Activated CD8-positive, alpha-beta T cell treated with anti-CD3 and anti-CD28 coated beads, Interleukin-2, amount 10 ng/mL, durations not matched to agents 7 days and 5 days (primary cell): ENCODE measurements at regions of chr16 and their contacts with region 1.

Region 1: DNA sequence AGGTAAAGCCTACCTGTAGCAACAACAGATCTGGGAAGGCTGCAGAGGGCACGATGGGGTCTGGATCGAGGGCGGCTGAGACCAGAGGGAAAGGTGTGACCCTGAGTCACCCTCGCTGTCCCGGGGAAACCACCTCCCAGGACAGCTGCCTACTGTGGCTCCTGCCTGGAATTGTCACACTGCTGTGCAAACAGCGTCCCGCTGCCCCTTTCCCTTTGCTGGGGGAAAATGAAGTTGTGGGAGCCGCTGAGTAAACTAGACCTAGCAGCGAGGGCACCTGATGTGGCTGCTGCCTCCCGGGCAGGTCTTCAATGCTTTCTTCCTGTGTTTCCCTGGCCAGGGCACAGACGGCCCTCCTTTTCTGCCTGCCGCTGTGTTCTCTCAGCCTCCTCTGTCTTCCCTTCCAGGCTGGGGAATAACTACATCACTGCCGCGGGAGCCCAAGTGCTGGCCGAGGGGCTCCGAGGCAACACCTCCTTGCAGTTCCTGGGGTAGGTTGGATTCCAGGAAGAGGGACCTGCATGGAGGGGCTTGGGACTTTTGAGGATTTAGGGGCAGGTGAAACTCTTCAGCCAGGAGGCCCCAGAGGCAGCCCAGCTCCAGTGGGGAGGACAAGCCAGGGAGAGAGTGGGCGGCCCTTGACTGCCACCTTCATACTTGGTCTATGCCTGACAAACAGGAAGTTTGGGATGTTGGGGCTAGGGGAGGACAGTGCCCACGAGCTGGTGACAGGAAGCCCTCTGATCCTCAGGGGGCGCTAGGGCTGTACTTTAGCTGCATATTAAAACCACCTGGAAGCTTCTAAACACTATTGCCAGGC is 22.2 kb upstream of the CYLD start:
- DNase-seq: peak; percentile 38
- ATAC-seq: peak; percentile 73
- H3K4me3 Mint-ChIP-seq: no peak overlapping the region
- H3K27ac Mint-ChIP-seq: peak overlapping the region; percentile 75
- H3K4me1 Mint-ChIP-seq: peaks cover 45% of the 10 kb centered on the region
- H3K27me3 Mint-ChIP-seq: no peaks in the 10 kb centered on the region

Region 2: DNA sequence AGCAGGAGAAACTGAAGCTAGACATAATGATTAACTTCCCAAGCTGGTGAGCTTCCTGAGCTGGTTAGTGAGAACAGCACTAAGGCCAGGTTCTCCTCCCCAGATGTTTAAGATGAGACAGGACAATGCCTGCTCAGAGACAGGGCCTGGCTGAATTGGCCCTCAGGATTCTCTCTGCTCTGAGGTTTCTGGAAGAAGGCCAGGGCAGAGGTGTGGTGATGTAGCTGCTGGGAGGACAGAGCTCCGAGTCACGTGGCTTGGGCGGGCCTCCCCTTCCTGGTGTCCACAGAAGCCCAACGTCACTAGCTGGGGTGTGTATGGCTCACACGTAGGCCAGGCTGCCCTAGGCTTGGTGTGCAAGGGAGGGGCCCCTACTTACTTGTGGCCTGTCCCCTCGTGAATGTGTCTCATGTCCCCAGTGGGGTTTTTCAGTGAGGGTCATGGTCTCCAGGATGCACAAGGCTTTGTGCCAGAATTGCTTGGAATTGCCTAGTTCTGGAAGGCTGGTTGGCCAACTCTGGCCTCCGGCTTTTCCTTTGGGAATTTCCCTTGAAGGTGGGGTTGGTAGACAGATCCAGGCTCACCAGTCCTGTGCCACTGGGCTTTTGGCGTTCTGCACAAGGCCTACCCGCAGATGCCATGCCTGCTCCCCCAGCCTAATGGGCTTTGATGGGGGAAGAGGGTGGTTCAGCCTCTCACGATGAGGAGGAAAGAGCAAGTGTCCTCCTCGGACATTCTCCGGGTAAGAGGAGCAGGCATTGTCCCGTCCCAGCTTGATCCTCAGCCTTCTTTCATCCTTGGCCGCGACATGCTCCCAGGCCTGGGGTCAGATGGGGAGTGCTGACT is 22.9 kb before region 1 on chr16:
- CTCF ChIA-PET with region 1: interaction called, 14 read pairs
- POLR2A ChIA-PET with region 1: no interaction called
- DNase-seq: no peak
- ATAC-seq: no peak
- H3K4me3 Mint-ChIP-seq: no peak overlapping the region
- H3K27ac Mint-ChIP-seq: peak overlapping the region; percentile 81
- H3K4me1 Mint-ChIP-seq: peaks cover 58% of the 10 kb centered on the region
- H3K27me3 Mint-ChIP-seq: peaks cover 17% of the 10 kb centered on the region